GM18951 (cell line): ENCODE measurements at regions of chr14 and their contacts with region 1.

Region 1: GRCh38 chr14:56075296-56075695 is 42.9 kb upstream of the PELI2 start:
- POLR2A ChIP-seq: no peak

Region 2: DNA sequence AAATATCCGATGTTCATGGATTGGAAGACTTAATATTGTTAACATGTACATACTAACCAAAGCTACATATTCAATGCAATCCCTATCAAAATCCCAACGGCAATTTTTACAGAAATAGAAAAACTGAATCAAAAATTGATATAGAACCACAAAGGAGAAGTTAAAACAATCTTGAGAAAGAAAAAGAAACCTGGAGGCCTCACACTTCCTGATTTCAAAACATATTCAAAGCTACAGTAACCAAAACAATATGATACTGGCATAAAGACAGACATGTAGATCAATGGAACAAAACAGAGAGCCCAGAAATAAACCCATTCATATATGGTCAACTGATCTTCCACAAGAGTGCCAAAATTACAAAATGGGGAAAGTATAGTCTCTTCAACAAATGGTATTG is 37.5 kb after region 1 on chr14:
- in situ Hi-C with region 1: loop called (anchors 5 kb)
- POLR2A ChIP-seq: no peak

Region 3: DNA sequence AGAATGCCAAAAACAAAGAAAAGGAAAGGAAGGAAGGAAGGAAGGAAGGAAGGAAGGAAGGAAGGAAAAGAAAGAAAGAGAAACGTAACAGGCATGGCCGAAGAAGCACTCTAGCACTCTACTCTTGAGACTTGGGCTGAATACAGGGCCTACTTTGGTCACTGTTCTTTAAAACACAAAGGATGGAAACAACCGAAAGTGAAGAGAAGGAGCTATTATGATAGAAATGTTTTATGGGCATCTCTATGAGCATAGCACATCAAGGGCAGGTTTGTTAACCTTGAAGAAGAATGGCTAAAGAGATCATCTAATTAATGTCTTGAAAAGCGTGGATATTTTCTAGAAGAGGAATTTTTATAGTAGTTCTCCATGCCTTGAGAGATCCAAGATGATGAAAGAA is 750.9 kb after region 1 on chr14:
- in situ Hi-C with region 1: no loop called
- POLR2A ChIP-seq: no peak